SK-N-SH (cell line): ENCODE measurements at regions of chr7 and their contacts with region 1.

Region 1: DNA sequence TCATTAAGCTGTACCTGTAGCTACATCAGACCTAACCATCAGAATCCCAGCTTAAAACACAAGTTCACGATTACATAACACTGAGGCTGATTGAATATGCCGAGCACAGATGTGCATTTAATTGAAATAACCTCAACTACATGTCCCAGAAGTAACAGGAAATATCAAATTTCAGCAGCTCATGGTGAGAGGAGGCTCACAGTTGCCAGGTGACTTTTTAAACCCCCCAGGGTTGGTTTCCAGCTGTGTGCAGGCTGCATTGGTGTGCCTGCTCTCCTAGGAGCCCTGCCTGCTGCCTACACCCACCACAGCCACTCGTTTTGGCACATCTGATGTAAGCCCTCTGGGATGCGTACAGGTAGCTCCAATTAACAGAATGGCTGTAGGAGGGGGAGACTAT is 161.6 kb downstream of the BMPER start:
- DNase-seq: no peak
- H3K4me3 ChIP-seq: no peak overlapping the region
- H3K27ac ChIP-seq: no peak overlapping the region
- H3K4me1 ChIP-seq: peaks cover 4 to 56% of the 10 kb centered on the region in 2 experiments; a peak in 3 of 4 replicates
- H3K27me3 ChIP-seq: no peaks in the 10 kb centered on the region
- CTCF ChIP-seq: no peak
- EP300 ChIP-seq: no peak
- RAD21 ChIP-seq: no peak

Region 2: GRCh38 chr7:34087892-34088891 is 21.2 kb after region 1 on chr7:
- CTCF ChIA-PET with region 1: interaction called, 14 read pairs
- POLR2A ChIA-PET with region 1: no interaction called
- DNase-seq: peak; percentile 37
- H3K4me3 ChIP-seq: no peak overlapping the region; a peak in 1 of 4 replicates
- H3K27ac ChIP-seq: no peak overlapping the region
- H3K4me1 ChIP-seq: peaks cover 0 to 4% of the 10 kb centered on the region in 2 experiments; a peak in 1 of 4 replicates
- H3K27me3 ChIP-seq: no peaks in the 10 kb centered on the region
- CTCF ChIP-seq: peak; percentile 86
- EP300 ChIP-seq: no peak
- RAD21 ChIP-seq: peak; percentile 73

Region 3: DNA sequence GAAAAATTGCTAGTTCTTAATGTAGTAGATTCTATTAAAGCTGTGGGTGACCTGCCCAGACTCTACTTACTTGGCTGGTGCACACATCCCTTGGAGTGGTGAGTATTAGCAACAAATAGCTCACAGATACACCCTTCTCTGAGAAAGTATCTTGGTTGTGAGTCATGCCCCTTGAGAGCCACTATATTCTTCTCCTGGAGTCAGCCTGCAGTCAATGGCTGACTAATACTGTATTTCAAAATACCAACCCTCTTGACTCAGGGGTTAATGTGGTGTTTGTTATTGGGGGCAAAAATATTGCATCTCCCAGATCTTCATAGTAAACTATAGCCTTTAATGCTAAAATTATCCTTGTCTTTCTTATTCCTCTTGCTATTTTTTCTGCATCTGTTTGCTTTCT is 193.3 kb after region 1 on chr7:
- CTCF ChIA-PET with region 1: no interaction called
- POLR2A ChIA-PET with region 1: no interaction called
- DNase-seq: no peak
- H3K4me3 ChIP-seq: no peak overlapping the region
- H3K27ac ChIP-seq: peak overlapping the region in 1 of 2 experiments; percentile 91; a peak in 3 of 4 replicates
- H3K4me1 ChIP-seq: peaks cover 0 to 14% of the 10 kb centered on the region in 2 experiments; a peak in 3 of 4 replicates
- H3K27me3 ChIP-seq: no peaks in the 10 kb centered on the region
- CTCF ChIP-seq: no peak
- EP300 ChIP-seq: peak in 1 of 2 experiments; percentile 89; a peak in 2 of 4 replicates
- RAD21 ChIP-seq: no peak

Region 4: DNA sequence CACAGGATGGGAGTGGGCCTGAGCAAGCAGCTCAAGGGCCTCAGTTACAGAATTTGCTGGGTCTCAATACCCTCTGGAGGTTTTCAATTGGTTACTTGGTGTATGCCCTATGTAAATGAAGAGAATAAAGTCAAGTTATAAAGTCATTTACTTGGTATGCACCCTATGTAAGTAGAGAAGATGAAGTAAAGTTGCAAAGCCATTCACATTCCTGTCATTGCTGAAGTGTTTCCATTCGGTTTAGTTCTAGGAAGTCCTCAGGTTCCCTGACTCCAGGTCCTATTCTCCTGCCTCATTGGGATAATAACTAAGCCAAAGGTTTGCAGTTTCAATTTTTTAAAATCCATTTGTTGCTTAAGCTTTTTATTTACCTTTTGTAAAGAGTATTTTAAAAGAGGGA is 318.4 kb after region 1 on chr7:
- CTCF ChIA-PET with region 1: no interaction called
- POLR2A ChIA-PET with region 1: no interaction called
- DNase-seq: no peak
- H3K4me3 ChIP-seq: no peak overlapping the region
- H3K27ac ChIP-seq: no peak overlapping the region
- H3K4me1 ChIP-seq: no peaks in the 10 kb centered on the region
- H3K27me3 ChIP-seq: no peaks in the 10 kb centered on the region; the same call in 1 of the 2 replicates
- CTCF ChIP-seq: no peak
- EP300 ChIP-seq: no peak
- RAD21 ChIP-seq: no peak